ENCODE measurements at regions of chr2 and their contacts with region 1.

Region 1: DNA sequence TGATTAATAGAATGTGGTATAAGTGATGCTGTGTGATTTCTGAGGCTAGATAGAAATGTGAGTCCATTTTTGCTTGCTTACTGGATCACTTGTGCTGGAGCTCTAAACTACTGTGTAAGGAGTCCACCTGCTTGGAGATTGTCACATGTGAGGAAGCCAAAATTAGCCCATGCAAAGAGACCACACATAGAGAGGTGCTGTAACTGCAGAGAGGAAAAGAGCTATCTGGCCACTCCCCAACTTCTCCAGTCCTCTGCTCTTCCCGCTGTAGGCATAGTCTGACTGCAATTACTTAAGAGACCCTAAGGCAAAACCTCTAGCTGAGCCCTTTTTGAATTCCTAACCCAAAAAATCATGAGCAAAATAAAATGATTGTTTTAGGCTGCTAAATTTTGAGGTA is 120.6 kb upstream of the FBXO11 start:
- DNase-seq: no peak
- H3K4me3 ChIP-seq: no peak overlapping the region
- H3K27ac ChIP-seq: no peak overlapping the region
- H3K4me1 ChIP-seq: no peaks in the 10 kb centered on the region
- H3K27me3 ChIP-seq: no peaks in the 10 kb centered on the region
- CTCF ChIP-seq: no peak
- POLR2A ChIP-seq: no peak

Region 2: DNA sequence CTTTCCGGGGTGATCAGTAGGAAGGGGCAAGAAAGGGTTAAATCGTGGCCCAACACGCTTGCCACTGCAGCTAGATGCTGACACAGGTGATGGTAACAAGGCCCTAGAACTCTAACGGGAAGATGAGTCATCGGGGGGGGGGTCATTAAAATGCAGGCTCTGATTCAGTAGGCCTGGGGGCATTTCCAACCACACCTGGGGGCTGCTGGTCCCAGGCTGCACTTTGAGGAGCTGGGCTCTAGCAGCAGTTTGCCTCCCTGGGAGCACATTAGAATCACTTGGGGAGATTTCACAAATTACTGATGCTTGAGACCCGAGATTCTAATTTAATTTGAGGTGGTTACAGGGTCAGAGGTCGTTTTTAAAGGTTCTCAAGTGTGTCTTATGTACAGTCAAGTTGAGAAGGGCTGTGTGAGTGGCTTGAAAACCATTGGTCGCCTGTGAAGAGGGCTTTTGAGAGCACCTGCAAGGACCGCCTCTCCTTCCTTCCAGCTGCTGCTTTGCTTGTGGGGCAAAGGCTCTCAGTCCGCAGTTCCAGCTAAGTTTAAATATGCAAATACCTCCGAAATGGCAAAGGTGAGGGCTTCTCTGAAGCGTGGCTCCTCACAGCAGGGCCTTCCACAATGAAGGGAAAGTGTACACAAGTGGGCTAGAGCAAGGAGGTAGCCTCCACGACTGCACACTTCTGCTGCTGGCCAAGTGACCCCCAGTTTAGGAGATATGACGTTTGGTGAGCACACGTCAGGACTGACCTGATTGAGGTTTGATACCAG is 371.9 kb before region 1 on chr2:
- intact Hi-C with region 1: loop called (anchors 5 kb)
- DNase-seq: no peak
- H3K4me3 ChIP-seq: no peak overlapping the region
- H3K27ac ChIP-seq: no peak overlapping the region
- H3K4me1 ChIP-seq: no peaks in the 10 kb centered on the region
- H3K27me3 ChIP-seq: no peaks in the 10 kb centered on the region
- CTCF ChIP-seq: no peak
- POLR2A ChIP-seq: no peak

Region 3: GRCh38 chr2:48092846-48093803 is 66.3 kb after region 1 on chr2:
- intact Hi-C with region 1: no loop called
- DNase-seq: no peak
- H3K4me3 ChIP-seq: no peak overlapping the region
- H3K27ac ChIP-seq: peak overlapping the region in 1 of 2 donors; percentile 35
- H3K4me1 ChIP-seq: no peaks in the 10 kb centered on the region
- H3K27me3 ChIP-seq: no peaks in the 10 kb centered on the region
- CTCF ChIP-seq: no peak
- POLR2A ChIP-seq: no peak